ENCODE measurements at regions of chr11 and their contacts with region 1.

Region 1: DNA sequence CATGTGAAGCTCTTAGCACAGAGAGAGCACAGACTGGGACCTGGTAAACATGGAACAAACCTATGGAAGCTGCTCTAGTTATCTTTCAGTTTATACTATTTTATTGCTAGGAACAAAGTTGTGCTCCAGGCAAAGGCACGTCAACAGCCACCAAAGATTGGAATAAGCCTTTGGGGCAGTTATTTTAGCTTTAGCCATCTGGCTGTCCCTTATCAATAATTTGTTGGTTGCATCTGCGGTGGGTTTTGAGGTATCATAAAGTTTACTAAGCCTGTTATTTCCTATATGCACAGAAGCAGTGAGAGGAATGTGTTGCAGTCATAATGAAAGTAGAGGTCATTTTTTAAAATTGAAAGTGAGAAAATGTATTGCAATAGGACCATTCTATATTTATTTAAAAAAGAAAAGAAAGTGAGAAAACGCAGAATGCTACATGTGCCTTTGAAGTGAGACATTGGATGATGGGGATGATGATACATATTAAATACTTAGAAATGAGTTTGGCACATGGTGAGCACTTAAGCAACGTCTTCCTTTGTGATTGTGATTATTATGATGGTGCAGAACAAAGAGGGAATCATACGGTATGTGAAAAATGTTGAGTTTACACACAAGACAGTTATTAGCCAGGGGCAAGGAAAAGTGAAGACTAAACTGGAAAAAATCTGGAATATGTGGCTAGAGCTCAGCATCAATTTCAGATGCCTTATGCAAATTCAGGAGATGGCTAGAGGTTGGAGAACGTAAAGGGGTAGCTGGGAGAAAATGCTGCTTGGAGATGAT is 58.3 kb downstream of the PRR5L start:
- DNase-seq: no peak
- H3K4me3 ChIP-seq: no peak overlapping the region
- H3K4me3 Mint-ChIP-seq: peak overlapping the region in 5 of 8 donors; percentile 1 to 23 (median 14)
- H3K27ac ChIP-seq: no peak overlapping the region
- H3K27ac Mint-ChIP-seq: peak overlapping the region in 5 of 7 donors; percentile 29 to 92 (median 76)
- H3K4me1 ChIP-seq: peaks cover 64% of the 10 kb centered on the region
- H3K4me1 Mint-ChIP-seq: peaks cover 29 to 78% (median 52%) of the 10 kb centered on the region in 4 donors
- H3K27me3 ChIP-seq: no peaks in the 10 kb centered on the region
- H3K27me3 Mint-ChIP-seq: peaks cover 2% of the 10 kb centered on the region in 2 donors

Region 2: GRCh38 chr11:36306888-36307287 is 47.5 kb before region 1 on chr11:
- CTCF ChIA-PET with region 1: interaction called, 6 read pairs
- POLR2A ChIA-PET with region 1: no interaction called
- intact Hi-C with region 1: loop called (anchors 2 kb)
- DNase-seq: peak in 2 of 5 donors; percentile 15 to 21
- H3K4me3 ChIP-seq: no peak overlapping the region
- H3K4me3 Mint-ChIP-seq: peak overlapping the region in 1 of 8 donors; percentile 49
- H3K27ac ChIP-seq: no peak overlapping the region
- H3K27ac Mint-ChIP-seq: peak overlapping the region in 1 of 7 donors; percentile 38
- H3K4me1 ChIP-seq: no peaks in the 10 kb centered on the region
- H3K4me1 Mint-ChIP-seq: peaks cover 0 to 10% (median 4%) of the 10 kb centered on the region in 4 donors
- H3K27me3 ChIP-seq: no peaks in the 10 kb centered on the region
- H3K27me3 Mint-ChIP-seq: peaks cover 3 to 12% of the 10 kb centered on the region in 2 donors

Region 3: GRCh38 chr11:36411202-36411640 is 56.8 kb after region 1 on chr11:
- CTCF ChIA-PET with region 1: interaction called, 18 read pairs
- POLR2A ChIA-PET with region 1: interaction called, 5 read pairs
- intact Hi-C with region 1: loop called (anchors 10 kb)
- DNase-seq: no peak
- H3K4me3 ChIP-seq: no peak overlapping the region
- H3K4me3 Mint-ChIP-seq: peak overlapping the region; percentile 29 to 87 (median 72)
- H3K27ac ChIP-seq: peak overlapping the region; percentile 48
- H3K27ac Mint-ChIP-seq: peak overlapping the region; percentile 74 to 95 (median 89)
- H3K4me1 ChIP-seq: peaks cover 70% of the 10 kb centered on the region
- H3K4me1 Mint-ChIP-seq: peaks cover 53 to 79% (median 61%) of the 10 kb centered on the region in 4 donors
- H3K27me3 ChIP-seq: no peaks in the 10 kb centered on the region
- H3K27me3 Mint-ChIP-seq: no peaks in the 10 kb centered on the region

Region 4: DNA sequence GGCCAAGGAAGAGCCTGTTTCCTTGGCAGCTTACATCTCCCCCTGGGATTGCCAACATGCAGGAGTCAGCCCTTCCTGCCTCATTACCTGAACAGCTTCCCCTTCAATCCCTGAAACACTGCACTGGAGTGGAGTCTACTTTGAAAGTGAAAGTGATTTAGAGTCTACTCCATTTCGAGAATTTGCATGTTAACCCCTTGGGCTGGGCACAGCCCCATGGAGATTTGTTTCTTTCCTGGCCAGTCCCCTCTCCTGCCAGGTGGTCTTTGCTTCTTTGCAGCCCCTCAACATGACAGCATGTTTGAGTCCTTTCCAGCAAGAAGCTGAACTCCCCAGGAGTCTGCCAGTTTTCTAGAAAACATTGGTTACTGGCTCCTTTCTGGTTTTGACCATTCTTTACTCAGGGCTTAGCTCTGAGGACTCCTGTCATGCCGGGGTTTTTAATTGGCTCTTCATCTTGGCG is 95.7 kb after region 1 on chr11:
- CTCF ChIA-PET with region 1: interaction called, 26 read pairs
- POLR2A ChIA-PET with region 1: interaction called, 22 read pairs
- intact Hi-C with region 1: loop called (anchors 2 kb)
- DNase-seq: peak in 1 of 5 donors; percentile 10
- H3K4me3 ChIP-seq: no peak overlapping the region
- H3K4me3 Mint-ChIP-seq: peak overlapping the region; percentile 24 to 83 (median 65)
- H3K27ac ChIP-seq: no peak overlapping the region
- H3K27ac Mint-ChIP-seq: peak overlapping the region; percentile 28 to 89 (median 76)
- H3K4me1 ChIP-seq: peaks cover 54% of the 10 kb centered on the region
- H3K4me1 Mint-ChIP-seq: peaks cover 45 to 68% (median 56%) of the 10 kb centered on the region in 4 donors
- H3K27me3 ChIP-seq: no peaks in the 10 kb centered on the region
- H3K27me3 Mint-ChIP-seq: no peaks in the 10 kb centered on the region

Region 5: GRCh38 chr11:36478700-36479329 is 124.4 kb after region 1 on chr11:
- CTCF ChIA-PET with region 1: interaction called, 131 read pairs
- POLR2A ChIA-PET with region 1: interaction called, 24 read pairs
- intact Hi-C with region 1: loop called (anchors 1 kb)
- DNase-seq: peak in 4 of 5 donors; percentile 34 to 43 (median 40)
- H3K4me3 ChIP-seq: no peak overlapping the region
- H3K4me3 Mint-ChIP-seq: no peak overlapping the region
- H3K27ac ChIP-seq: no peak overlapping the region
- H3K27ac Mint-ChIP-seq: peak overlapping the region in 1 of 7 donors; percentile 10
- H3K4me1 ChIP-seq: no peaks in the 10 kb centered on the region
- H3K4me1 Mint-ChIP-seq: peaks cover 3 to 8% (median 6%) of the 10 kb centered on the region in 4 donors
- H3K27me3 ChIP-seq: no peaks in the 10 kb centered on the region
- H3K27me3 Mint-ChIP-seq: no peaks in the 10 kb centered on the region

Measured in CD4-positive, alpha-beta memory T cell (primary cell).